ENCODE measurements at regions of chr20 and their contacts with region 1.

Region 1: GRCh38 chr20:36886859-36887751 is 11.2 kb downstream of the TLDC2 start:
- DNase-seq: peak; percentile 74
- ATAC-seq: peak; percentile 99
- H3K4me3 ChIP-seq: no peak overlapping the region
- H3K27ac ChIP-seq: no peak overlapping the region
- H3K4me1 ChIP-seq: no peaks in the 10 kb centered on the region; the same call in 1 of the 2 replicates
- H3K27me3 ChIP-seq: peaks cover 2% of the 10 kb centered on the region; the same call in 1 of the 2 replicates
- CTCF ChIP-seq: peak; percentile 96
- POLR2A ChIP-seq: peak; percentile 44; the same call in 1 of the 2 replicates
- RAD21 ChIP-seq: peak; percentile 98

Region 2: DNA sequence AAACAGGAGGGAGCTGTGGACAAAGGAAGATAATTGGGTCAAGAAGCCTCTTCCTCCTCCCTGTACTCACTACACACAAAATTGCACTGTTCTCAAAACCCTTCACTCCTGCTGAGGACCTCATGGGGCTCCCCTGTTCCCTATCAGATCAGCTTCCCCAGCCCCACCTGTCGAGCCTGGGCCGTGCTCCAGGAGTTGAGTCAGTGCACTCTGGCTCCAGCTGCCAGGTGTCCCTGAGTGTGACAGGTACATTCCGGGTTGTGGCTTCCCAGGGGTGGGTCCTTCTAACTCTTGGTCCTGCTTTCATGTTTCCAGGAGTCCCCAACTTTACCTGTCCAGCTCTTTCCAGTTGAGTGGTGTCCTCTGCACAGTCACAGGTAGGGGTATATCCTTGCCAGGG is 273.1 kb before region 1 on chr20:
- CTCF ChIA-PET with region 1: no interaction called
- POLR2A ChIA-PET with region 1: no interaction called
- dilution Hi-C with region 1: no loop called
- in situ Hi-C with region 1: loop called (anchors 5 kb)
- intact Hi-C with region 1: loop called (anchors 10 kb)
- DNase-seq: no peak
- ATAC-seq: no peak
- H3K4me3 ChIP-seq: no peak overlapping the region
- H3K27ac ChIP-seq: no peak overlapping the region
- H3K4me1 ChIP-seq: no peaks in the 10 kb centered on the region
- H3K27me3 ChIP-seq: no peaks in the 10 kb centered on the region
- CTCF ChIP-seq: no peak
- POLR2A ChIP-seq: no peak
- RAD21 ChIP-seq: no peak

Region 3: DNA sequence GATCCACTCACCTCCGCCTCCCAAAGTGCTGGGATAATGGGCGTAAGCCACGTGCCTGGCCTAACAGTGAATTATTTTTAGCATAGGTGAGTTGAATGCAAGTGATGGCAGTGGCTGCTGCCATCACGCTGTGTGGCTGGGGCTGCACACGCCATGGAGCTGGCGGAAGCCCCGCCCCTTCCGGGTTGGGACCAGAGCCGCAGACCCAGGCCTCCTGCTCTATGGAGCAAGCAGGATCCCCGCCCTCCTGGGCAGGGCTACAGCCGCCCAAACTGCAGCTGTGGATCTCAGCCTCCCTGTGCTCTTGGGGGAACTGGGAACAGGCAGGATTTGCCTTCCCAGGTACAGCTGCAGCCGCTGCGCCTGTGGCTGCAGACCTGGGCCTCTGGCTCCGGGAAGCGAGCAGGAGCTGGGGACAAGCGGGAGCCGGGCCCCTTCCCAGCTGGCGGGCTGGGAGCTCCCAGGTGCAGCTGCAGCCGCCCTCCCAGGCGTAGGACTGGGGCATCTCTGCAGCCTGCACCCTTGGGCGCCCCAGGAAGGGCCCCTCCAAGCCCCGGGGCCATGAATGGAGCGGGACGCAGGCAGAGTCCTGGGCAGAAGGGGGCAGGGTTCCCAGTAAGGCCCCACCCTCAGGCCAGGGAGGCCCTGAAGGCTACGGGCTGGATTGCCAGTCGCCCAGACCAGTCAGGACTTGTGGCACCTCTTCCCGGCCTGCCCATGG is 210.2 kb before region 1 on chr20:
- CTCF ChIA-PET with region 1: no interaction called
- POLR2A ChIA-PET with region 1: no interaction called
- dilution Hi-C with region 1: no loop called
- in situ Hi-C with region 1: no loop called
- intact Hi-C with region 1: no loop called
- DNase-seq: no peak
- ATAC-seq: no peak
- H3K4me3 ChIP-seq: no peak overlapping the region
- H3K27ac ChIP-seq: no peak overlapping the region
- H3K4me1 ChIP-seq: peaks cover 4% of the 10 kb centered on the region; the same call in 1 of the 2 replicates
- H3K27me3 ChIP-seq: no peaks in the 10 kb centered on the region
- CTCF ChIP-seq: no peak
- POLR2A ChIP-seq: no peak
- RAD21 ChIP-seq: no peak

Region 4: GRCh38 chr20:36792422-36792821 is 94.7 kb before region 1 on chr20:
- CTCF ChIA-PET with region 1: interaction called, 3 read pairs
- POLR2A ChIA-PET with region 1: no interaction called
- dilution Hi-C with region 1: no loop called
- in situ Hi-C with region 1: no loop called
- intact Hi-C with region 1: loop called (anchors 5 kb)
- DNase-seq: peak; percentile 72
- ATAC-seq: peak; percentile 94
- H3K4me3 ChIP-seq: no peak overlapping the region
- H3K27ac ChIP-seq: no peak overlapping the region
- H3K4me1 ChIP-seq: no peaks in the 10 kb centered on the region
- H3K27me3 ChIP-seq: no peaks in the 10 kb centered on the region
- CTCF ChIP-seq: peak; percentile 54
- POLR2A ChIP-seq: no peak
- RAD21 ChIP-seq: peak; percentile 68

Measured in IMR-90 (cell line).